Activated naive CD4-positive, alpha-beta T cell treated with anti-CD3 and anti-CD28 coated beads for 36 hours (primary cell): ENCODE measurements at regions of chr9 and their contacts with region 1.

Region 1: DNA sequence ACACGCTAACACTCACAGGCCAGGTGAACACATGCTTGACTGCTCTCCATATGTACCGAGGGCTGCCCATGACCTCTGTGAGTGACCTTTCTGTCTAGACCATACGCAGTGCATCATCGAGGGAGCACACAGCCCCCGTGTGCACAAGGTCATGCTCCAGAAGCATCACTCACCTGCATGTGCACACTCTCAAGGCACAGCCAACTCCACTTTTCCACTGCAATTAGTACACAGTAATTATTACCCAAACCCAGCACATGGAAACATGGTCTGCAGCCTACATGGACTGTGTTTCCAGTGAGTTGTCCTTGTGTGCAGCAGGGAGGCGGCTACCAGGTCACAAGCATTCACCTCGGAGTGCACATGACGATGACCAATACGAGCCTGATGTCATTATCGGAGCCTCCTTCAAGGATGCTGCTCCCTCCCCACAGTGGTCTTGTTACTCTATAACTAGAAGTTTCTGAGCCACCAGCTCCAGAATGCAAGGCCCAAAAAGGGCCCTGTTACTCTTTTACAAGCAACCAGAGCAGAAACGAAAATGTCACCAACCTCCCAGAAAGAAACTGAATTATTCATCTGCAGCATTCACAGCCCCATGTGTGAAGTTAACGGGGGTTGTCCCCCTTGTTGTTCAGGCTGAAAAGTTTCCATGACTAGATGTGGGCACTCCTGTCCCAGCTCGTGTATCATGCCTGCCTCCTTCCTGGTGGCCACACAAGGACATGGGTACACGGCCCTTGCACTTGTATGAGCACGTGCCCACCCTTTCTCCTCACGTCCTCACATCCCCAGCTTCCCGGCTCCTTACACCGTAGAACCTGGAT is 31.2 kb downstream of the SEMA4D start:
- DNase-seq: peak; percentile 86
- H3K4me3 Mint-ChIP-seq: peak overlapping the region; percentile 38
- H3K27ac Mint-ChIP-seq: peak overlapping the region; percentile 97
- H3K4me1 Mint-ChIP-seq: peaks cover 96% of the 10 kb centered on the region
- H3K27me3 Mint-ChIP-seq: no peaks in the 10 kb centered on the region

Region 2: DNA sequence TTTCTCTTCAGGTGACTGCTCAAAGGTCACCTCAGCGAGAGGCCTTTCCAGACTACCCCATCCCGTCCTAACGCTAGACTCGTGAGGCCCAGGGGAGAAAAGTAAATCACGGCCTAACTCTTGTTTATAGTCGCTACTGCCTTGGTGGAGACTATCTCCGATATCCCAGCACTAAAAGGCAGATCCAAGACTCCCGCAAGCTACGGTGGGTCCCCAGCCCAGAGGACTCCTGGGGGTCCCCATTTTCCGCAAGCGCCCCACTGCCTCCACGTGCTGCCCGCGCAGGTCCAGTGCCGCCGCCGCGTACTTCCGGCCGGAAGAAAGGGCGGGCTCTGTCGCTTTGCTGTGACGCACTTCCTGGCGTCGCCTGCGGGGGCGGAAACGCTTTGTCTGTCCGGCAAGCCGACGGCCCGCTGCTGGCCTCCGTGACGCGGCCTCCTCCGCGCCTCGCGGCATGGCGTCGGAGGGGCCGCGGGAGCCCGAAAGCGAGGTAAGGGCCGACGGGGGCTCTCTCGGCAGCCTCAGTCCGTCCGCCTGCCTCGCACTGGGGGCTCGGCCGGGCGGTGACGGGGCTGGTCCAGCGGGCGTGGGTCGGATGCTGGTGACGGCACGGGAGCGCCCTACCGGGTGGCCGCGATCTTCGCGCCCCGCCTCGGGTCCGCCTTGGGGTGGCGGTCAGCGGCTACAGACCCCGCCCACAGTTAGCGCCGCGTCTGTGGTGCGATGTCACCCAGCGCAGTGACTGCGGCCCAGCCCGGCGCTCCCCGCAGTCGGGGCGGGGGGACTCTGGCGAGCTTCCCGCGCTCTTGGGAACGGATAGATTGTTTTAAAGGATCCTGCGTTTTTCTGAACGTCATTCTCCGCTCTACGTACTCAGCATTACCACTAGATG is 148.3 kb before region 1 on chr9 and contains the start of gene SECISBP2:
- CTCF ChIA-PET with region 1: no interaction called
- intact Hi-C with region 1: loop called (anchors 2 kb)
- DNase-seq: peak; percentile 95
- H3K4me3 Mint-ChIP-seq: peak within 1 kb of the TSS; percentile 89
- H3K27ac Mint-ChIP-seq: peak within 1 kb of the TSS; percentile 93
- H3K4me1 Mint-ChIP-seq: peaks cover 79% of the 10 kb centered on the region
- H3K27me3 Mint-ChIP-seq: no peaks in the 10 kb centered on the region
- total RNA-seq, gene SECISBP2: 42.8 to 45.8 TPM

Region 3: GRCh38 chr9:89428901-89429890 is 37.5 kb before region 1 on chr9:
- CTCF ChIA-PET with region 1: interaction called, 6 read pairs
- intact Hi-C with region 1: loop called (anchors 1 kb)
- DNase-seq: peak; percentile 79
- H3K4me3 Mint-ChIP-seq: no peak overlapping the region
- H3K27ac Mint-ChIP-seq: peak overlapping the region; percentile 98
- H3K4me1 Mint-ChIP-seq: peaks cover 90% of the 10 kb centered on the region
- H3K27me3 Mint-ChIP-seq: no peaks in the 10 kb centered on the region

Region 4: GRCh38 chr9:89483592-89484522 is 17.2 kb after region 1 on chr9:
- CTCF ChIA-PET with region 1: interaction called, 5 read pairs
- intact Hi-C with region 1: loop called (anchors 2 kb)
- DNase-seq: peak; percentile 75
- H3K4me3 Mint-ChIP-seq: peak overlapping the region; percentile 78
- H3K27ac Mint-ChIP-seq: peak overlapping the region; percentile 91
- H3K4me1 Mint-ChIP-seq: peaks cover 87% of the 10 kb centered on the region
- H3K27me3 Mint-ChIP-seq: no peaks in the 10 kb centered on the region

Region 5: DNA sequence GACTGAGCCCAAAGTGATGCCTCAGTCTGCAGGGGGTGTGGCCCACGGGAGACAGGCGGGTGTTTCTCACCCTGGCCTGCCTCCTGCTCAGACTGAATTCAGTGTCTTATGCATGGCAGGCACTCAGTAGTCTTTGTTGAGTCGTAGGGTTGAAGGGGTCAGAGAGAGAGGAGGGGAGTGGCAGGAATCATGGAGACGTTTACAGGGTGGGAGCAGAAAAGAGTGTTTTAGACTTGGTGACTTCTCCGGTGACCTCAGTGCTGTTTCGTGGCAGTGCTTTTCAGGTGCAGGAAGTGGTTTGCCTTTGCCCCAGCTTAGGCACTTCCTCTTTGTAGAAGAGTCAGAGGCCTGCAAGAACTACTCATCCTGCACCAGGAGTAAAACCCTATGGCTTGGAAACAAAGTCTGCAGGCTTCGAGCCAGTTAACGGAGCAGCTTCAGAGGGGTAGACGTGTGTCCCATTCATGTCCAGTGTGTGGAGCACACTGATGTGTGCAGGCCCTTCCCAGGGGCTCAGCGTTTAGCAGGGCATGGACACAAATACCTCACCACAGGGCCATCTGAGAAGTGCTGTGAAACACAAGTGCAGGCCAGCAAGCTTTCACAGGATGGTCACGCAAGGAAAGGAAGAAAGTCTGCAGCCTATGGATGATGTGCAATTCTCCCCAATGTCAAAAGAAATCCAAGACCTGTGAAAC is 55.7 kb after region 1 on chr9:
- CTCF ChIA-PET with region 1: interaction called, 4 read pairs
- intact Hi-C with region 1: loop called (anchors 1 kb)
- DNase-seq: peak; percentile 89
- H3K4me3 Mint-ChIP-seq: peak overlapping the region; percentile 58
- H3K27ac Mint-ChIP-seq: peak overlapping the region; percentile 96
- H3K4me1 Mint-ChIP-seq: peaks cover 93% of the 10 kb centered on the region
- H3K27me3 Mint-ChIP-seq: no peaks in the 10 kb centered on the region

Region 6: GRCh38 chr9:89984214-89984613 is 517.5 kb after region 1 on chr9:
- CTCF ChIA-PET with region 1: no interaction called
- intact Hi-C with region 1: loop called (anchors 5 kb)
- DNase-seq: no peak
- H3K4me3 Mint-ChIP-seq: peak overlapping the region; percentile 33
- H3K27ac Mint-ChIP-seq: peak overlapping the region; percentile 88
- H3K4me1 Mint-ChIP-seq: peaks cover 49% of the 10 kb centered on the region
- H3K27me3 Mint-ChIP-seq: peaks cover 17% of the 10 kb centered on the region